Activated B cell treated with CpG ODN at 0.5 μM for 24 hours (primary cell): ENCODE measurements at regions of chr13 and their contacts with region 1.

Region 1: DNA sequence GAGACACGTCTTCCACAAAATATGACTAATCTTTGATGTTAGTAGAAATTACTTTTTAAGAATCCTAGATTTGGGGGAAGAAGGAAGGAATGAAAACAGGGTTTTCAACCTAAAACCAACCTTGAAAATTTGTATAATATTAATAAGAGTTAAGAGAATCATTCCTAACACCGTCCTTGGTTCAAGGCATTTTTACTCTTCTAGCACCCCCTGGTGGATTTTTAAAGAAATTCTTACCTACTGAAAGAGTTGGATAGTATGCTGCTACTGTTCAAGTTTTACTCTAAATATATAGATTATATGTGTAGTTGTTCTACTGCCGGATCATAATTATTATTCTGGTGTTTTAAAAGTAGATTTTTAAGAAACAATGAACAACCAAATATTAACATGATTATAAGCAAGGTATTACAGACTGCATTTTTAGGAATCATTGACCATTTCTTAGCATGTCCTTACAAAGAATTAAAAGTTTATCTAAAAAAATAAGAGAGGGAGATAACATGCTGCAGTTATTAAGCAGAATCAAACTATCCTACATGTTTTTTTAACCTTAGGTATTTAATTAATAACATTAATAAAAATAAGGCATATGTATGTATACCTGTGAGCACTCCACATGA is 7.4 kb upstream of the SLITRK6 start:
- DNase-seq: no peak
- ATAC-seq: no peak
- H3K4me3 Mint-ChIP-seq: no peak overlapping the region
- H3K27ac Mint-ChIP-seq: no peak overlapping the region
- H3K4me1 Mint-ChIP-seq: no peaks in the 10 kb centered on the region
- H3K27me3 Mint-ChIP-seq: no peaks in the 10 kb centered on the region
- CTCF ChIP-seq: no peak

Region 2: DNA sequence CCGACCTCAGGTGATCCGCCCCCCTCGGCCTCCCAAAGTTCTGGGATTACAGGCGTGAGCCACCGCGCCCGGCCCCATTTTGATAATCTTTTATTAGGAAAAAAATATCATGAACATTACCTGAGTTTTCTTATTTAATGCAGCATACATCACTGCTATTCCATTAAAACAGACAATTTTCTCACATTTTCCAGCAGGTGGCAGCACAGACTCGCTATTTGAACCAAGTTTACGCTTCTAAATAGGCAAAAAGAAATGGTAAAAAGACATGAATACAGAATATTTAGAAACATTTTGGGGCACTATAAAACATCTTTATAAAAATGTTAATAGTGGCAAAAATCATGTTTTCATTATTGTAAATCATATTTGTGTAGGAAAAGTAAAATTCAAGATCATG is 910.5 kb before region 1 on chr13:
- CTCF ChIA-PET with region 1: no interaction called
- POLR2A ChIA-PET with region 1: no interaction called
- intact Hi-C with region 1: loop called (anchors 1 kb)
- DNase-seq: no peak
- ATAC-seq: no peak
- H3K4me3 Mint-ChIP-seq: no peak overlapping the region
- H3K27ac Mint-ChIP-seq: no peak overlapping the region
- H3K4me1 Mint-ChIP-seq: no peaks in the 10 kb centered on the region
- H3K27me3 Mint-ChIP-seq: no peaks in the 10 kb centered on the region
- CTCF ChIP-seq: no peak

Region 3: DNA sequence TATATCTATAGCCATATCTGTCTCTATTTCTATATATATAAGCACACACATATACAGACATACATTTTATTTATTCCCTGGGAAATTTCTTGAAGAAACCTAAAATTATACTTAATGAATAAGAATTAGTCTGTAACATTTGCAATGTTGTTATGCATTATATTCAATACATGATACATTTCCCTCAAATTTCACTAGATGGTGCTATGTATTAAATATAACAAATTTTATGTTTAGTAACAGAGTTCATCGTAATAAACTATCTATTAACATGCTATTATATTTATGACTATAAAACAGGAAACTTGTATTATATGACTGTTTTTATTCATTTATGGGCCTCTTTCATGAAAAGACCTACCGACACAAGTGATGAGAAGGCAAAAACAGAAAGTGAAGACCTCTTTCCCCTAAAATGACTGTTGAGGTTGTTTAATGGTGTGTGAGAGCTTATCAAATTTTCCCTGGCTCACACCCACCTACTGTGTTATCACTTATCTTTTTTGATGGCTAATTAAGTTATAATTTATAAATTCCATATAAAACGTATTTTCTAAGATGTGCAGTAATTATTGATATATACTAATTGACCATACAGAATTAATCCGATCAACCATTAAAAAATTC is 889.3 kb before region 1 on chr13:
- CTCF ChIA-PET with region 1: no interaction called
- POLR2A ChIA-PET with region 1: no interaction called
- intact Hi-C with region 1: loop called (anchors 5 kb)
- DNase-seq: no peak
- ATAC-seq: no peak
- H3K4me3 Mint-ChIP-seq: no peak overlapping the region
- H3K27ac Mint-ChIP-seq: no peak overlapping the region
- H3K4me1 Mint-ChIP-seq: no peaks in the 10 kb centered on the region
- H3K27me3 Mint-ChIP-seq: no peaks in the 10 kb centered on the region
- CTCF ChIP-seq: no peak